Endothelial cell of umbilical vein (primary cell): ENCODE measurements at regions of chr6 and their contacts with region 1.

Region 1: DNA sequence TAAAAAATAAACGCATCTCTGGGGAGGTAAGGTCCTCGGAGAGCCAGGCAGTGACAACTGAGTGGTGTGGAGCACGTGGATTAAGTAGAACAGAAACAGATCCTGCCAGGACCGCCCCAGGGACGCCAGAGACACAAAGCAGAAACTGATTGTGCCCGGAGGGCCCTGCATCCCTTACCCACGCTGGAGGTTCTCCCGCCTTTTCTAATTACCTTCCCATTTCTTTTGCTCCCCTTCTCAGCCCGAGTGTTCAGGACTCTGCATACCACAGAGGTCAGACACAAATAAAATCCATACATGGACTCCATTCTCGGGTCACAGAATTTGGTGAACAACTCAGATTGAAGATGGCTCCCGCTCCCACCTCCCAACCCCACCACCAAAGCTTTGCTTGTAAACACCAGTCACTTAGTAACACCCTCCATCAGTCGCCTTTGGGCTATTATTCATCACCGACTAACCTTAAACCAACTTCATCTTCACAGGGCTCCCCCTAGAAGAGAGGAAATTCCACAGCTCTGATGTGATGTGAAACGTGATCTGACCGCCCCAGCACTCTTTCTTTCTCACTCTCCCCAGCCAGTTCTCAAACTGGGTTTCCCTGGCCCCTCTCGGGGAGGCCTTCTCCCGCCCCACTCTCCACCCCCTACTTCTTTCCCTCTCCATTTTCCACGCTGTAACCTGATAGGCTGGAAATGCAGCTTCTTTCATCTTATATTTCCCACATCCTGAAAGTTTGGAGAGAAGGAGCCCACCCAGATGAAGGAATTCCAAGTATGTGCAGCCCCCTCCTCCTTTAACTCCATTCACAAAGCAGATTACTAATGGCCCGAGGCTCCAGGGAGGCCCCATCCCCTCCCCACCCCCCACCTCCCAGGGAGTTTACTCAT is 32.5 kb upstream of the PIM1 start:
- DNase-seq: peak; percentile 96
- H3K4me3 ChIP-seq: no peak overlapping the region
- H3K27ac ChIP-seq: peak overlapping the region; percentile 99
- H3K4me1 ChIP-seq: peaks cover 44% of the 10 kb centered on the region
- H3K27me3 ChIP-seq: no peaks in the 10 kb centered on the region
- CTCF ChIP-seq: no peak
- POLR2A ChIP-seq: no peak

Region 2: GRCh38 chr6:37051138-37052026 is 86.1 kb before region 1 on chr6:
- CTCF ChIA-PET with region 1: interaction called, 11 read pairs
- POLR2A ChIA-PET with region 1: no interaction called
- dilution Hi-C with region 1: no loop called
- intact Hi-C with region 1: no loop called
- DNase-seq: peak; percentile 79
- H3K4me3 ChIP-seq: no peak overlapping the region
- H3K27ac ChIP-seq: no peak overlapping the region
- H3K4me1 ChIP-seq: no peaks in the 10 kb centered on the region
- H3K27me3 ChIP-seq: peaks cover 0 to 4% of the 10 kb centered on the region in 2 experiments
- CTCF ChIP-seq: peak; percentile 81 to 93
- POLR2A ChIP-seq: no peak

Region 3: DNA sequence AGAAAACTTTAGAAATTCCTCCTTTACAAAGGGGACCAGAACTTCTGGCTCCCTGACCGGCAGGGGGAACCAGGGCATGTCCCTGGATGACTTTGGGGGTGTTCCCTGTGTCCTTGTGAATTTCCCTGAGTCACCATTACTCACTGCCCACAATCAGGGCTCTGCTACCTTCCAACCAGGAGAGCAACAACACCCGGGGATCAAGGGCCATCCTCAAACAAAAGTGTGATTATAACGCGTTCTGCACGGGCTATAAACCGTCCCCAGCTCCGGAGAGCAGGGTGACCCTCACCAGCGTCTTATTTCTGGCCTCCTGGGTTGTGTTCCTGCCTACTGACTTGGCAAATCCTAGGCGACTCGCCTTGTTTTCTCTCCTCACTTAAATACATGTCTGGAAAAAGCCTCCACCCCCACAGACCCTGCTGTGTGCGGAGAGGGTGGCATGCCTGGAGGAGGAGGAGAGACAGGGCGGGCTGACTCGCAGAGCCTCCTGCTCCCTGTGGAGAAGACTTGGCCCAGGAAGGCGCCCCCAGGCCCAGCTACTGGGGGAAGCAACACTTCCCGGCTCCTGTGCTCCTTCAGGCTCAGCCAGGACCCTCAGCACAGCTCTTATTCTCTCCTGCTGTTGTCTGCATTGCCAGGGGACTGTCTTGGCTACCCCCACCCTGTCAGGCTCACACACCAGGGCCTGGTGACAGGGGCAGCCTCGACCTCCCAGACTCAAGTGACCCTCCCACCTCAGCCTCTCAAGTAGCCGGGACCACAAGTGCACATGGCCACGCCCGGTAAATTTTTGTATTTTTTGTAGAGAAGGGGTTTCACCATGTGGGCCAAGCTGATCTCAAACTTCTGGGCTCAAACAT is 77.9 kb before region 1 on chr6:
- CTCF ChIA-PET with region 1: no interaction called
- POLR2A ChIA-PET with region 1: no interaction called
- dilution Hi-C with region 1: no loop called
- intact Hi-C with region 1: loop called (anchors 2 kb)
- DNase-seq: peak; percentile 77
- H3K4me3 ChIP-seq: no peak overlapping the region
- H3K27ac ChIP-seq: peak overlapping the region; percentile 69
- H3K4me1 ChIP-seq: peaks cover 9% of the 10 kb centered on the region
- H3K27me3 ChIP-seq: no peaks in the 10 kb centered on the region
- CTCF ChIP-seq: peak; percentile 53 to 60
- POLR2A ChIP-seq: no peak

Region 4: DNA sequence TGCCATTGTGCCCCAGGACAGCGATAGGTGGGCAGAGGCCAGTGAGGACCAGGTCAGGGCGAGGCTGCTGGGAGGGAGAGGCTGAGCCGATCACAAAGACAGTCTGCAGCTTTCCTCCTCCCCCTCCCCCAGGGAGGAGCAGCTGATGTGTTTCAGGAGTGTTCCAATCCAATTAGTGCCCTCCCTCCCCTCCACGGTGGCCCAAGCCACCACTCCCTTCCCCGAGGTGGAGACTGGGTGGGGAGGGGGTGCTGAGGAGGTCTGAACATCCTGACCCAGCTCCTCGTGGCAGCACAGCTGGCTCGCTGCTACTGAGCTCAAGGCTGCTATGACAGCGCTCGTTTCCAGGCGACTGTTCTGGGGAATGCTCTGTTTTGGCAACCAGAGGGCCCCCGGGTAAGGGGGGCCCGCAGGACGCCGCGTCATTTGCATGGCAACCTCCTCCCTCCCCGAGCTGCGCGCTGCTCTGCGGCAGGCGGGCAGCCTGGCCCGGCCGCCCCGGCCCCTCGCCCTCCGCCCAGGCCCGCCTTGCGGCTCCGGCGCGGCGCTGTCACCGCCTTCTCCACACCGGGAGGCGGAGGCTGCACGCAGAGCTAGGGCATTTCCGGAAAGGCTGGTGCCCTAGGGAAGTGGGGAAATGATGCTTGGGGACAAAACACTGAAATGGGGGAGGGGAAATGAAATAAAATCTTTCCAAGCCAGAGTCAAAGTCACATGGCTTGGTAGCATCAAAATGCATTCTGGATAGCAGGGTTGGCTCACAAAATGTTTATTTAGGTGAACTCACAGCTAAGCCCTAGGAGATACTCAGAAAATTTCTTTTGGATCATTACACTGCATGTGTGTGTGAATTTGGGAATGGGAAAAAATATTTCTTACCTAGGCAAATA is 34.9 kb before region 1 on chr6:
- CTCF ChIA-PET with region 1: no interaction called
- POLR2A ChIA-PET with region 1: no interaction called
- dilution Hi-C with region 1: no loop called
- intact Hi-C with region 1: loop called (anchors 1 kb)
- DNase-seq: peak; percentile 83
- H3K4me3 ChIP-seq: peak overlapping the region; percentile 15 to 63 (median 22)
- H3K27ac ChIP-seq: peak overlapping the region; percentile 72
- H3K4me1 ChIP-seq: peaks cover 18% of the 10 kb centered on the region
- H3K27me3 ChIP-seq: no peaks in the 10 kb centered on the region
- CTCF ChIP-seq: no peak
- POLR2A ChIP-seq: peak; percentile 33

Region 5: DNA sequence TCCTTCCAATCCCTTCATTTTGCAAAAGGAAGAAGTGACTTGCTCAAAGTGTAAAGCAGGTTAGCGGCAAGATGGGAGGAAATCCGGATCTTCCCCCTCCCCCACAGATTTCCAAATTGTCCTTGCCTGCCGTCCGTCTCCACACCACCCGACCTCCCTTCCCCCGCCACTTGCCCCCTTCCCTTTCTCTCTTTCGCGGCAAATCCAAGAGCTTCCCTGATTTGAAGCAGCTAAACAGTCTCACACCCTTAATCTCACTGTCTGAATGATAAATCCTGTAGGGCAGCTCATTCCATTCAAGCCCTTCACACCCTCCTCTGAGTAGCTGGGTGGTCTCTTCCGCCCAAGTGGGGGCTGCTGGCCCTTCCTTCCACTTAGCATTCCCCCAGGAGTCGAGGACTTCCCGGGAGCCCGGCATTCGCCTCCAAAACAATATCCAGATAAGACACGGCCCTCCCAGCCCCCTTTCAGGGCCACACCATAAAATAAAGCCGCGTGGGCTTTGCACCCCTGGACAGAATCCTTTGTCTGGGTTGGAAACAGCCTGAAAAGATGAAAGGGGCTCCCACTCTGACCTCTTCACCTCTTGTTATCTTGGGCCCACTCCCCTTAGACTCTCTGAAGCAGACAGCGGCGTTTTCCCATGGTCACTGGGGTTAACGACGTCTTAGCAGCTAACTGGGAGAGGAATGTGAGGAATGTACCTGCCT is 11.5 kb before region 1 on chr6:
- CTCF ChIA-PET with region 1: interaction called, 9 read pairs
- POLR2A ChIA-PET with region 1: no interaction called
- dilution Hi-C with region 1: no loop called
- intact Hi-C with region 1: loop called (anchors 1 kb)
- DNase-seq: peak; percentile 42
- H3K4me3 ChIP-seq: no peak overlapping the region
- H3K27ac ChIP-seq: peak overlapping the region; percentile 64
- H3K4me1 ChIP-seq: peaks cover 18% of the 10 kb centered on the region
- H3K27me3 ChIP-seq: no peaks in the 10 kb centered on the region
- CTCF ChIP-seq: no peak
- POLR2A ChIP-seq: no peak